ENCODE measurements at regions of chr4 and their contacts with region 1.

Region 1: DNA sequence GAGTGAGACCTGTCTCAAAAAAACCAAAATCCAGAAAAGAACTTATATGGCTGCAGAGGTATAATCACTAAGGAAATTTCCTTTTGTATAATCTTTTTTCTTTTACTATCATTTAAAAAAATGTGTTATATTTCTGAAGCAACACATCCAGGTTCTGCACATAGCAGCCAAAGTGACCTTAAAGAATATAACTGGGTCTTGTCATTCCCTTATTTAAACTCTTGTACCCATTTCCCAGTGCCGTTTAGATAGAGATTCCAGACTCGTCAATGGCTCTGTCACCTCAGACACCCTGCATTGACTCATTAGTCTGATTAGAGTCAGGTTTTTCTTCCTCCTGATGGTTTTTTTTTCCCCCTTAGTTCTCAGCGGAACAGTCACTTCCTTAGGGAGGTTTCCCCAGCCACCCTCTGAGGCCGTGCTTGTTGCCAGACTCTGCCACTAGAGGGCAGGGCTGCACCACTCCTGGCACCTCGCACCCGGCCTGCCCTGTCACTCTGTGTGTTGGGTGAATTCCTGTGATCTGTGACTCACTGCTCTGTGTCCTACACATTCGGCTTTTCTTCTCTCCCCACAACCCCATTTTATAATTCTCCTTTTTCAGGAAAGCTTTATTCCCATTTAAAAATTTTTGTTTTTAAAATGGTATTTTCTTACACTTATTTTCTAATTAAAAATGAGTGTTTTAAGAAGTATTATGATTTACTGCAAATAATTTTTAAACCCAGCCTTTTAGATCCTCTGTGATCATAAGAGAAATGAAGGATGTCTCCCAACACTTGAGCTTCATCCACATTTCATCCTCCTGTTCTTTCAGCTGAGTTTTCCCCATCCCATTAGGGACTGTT is 32.1 kb downstream of the HTT start:
- DNase-seq: peak; percentile 67 to 95
- H3K4me3 ChIP-seq: no peak overlapping the region
- H3K27ac ChIP-seq: peak overlapping the region; percentile 1 to 57
- H3K4me1 ChIP-seq: peaks cover 2 to 7% of the 10 kb centered on the region in 2 donors
- H3K27me3 ChIP-seq: no peaks in the 10 kb centered on the region
- CTCF ChIP-seq: peak; percentile 91 to 96 (median 91)

Region 2: DNA sequence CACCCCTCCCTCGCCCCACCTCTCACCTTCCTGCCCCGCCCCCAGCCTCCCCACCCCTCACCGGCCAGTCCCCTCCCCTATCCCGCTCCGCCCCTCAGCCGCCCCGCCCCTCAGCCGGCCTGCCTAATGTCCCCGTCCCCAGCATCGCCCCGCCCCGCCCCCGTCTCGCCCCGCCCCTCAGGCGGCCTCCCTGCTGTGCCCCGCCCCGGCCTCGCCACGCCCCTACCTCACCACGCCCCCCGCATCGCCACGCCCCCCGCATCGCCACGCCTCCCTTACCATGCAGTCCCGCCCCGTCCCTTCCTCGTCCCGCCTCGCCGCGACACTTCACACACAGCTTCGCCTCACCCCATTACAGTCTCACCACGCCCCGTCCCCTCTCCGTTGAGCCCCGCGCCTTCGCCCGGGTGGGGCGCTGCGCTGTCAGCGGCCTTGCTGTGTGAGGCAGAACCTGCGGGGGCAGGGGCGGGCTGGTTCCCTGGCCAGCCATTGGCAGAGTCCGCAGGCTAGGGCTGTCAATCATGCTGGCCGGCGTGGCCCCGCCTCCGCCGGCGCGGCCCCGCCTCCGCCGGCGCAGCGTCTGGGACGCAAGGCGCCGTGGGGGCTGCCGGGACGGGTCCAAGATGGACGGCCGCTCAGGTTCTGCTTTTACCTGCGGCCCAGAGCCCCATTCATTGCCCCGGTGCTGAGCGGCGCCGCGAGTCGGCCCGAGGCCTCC is 32.3 kb before region 1 on chr4 and contains the starts of genes HTT and HTT-AS:
- intact Hi-C with region 1: no loop called
- DNase-seq: peak; percentile 80 to 97
- H3K4me3 ChIP-seq: peak within 1 kb of the TSS; percentile 95 to 99
- H3K27ac ChIP-seq: peak within 1 kb of the TSS; percentile 86 to 98
- H3K4me1 ChIP-seq: peaks cover 12 to 14% of the 10 kb centered on the region in 2 donors
- H3K27me3 ChIP-seq: no peaks in the 10 kb centered on the region
- CTCF ChIP-seq: no peak
- total RNA-seq, gene HTT: 23.7 TPM
- total RNA-seq, gene HTT-AS: not detected

Region 3: GRCh38 chr4:3135155-3136011 is 28.8 kb after region 1 on chr4:
- intact Hi-C with region 1: loop called (anchors 2 kb)
- DNase-seq: no peak
- H3K4me3 ChIP-seq: peak overlapping the region in 1 of 2 donors; percentile 31
- H3K27ac ChIP-seq: peak overlapping the region; percentile 25 to 64
- H3K4me1 ChIP-seq: peaks cover 0 to 10% of the 10 kb centered on the region in 2 donors
- H3K27me3 ChIP-seq: no peaks in the 10 kb centered on the region
- CTCF ChIP-seq: no peak

Region 4: DNA sequence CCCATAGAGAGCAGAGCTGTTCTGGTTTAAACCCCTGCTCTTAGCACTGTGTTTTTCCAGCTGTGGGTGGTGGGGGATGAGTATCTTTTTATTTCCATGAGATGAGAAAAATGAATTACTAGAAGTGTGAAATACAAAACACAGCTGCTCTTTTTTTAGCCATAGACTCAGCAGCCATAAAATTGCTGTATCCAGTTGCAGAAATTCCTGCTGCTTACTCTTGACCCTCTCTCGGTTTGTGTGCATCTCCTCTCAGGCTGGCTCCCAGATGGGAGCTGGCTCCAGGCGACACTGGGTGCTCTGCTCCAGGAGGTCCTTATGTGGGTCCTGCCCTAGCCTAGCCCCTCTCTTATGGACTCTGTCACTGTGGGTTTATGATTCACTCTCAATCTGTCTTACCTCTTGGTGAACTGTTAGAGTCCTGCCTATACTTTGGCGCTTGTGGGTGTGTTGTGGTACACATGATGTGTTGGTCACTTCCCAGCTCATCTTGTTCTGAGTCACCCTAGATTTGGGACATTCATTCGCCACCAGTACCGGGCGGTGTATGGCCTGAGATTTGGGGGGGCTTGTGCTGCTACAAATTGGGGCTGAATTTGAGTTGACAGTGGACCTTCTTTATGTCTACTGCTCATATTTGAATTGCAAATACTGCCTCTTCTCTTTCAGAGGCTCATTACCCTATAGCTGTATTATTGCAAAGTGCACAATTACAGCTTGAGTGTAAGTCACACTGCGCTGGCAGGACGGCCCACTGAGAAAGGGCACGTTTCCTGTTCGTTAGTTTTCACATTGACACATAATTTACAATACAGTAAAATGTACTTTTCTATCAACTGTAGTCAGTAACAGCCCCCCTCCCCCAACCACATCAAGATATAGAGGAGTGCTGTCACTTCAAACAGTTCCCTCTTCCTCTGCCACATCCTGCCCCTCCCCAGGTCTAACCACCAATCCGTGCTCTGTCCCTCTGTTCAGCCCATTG is 95.4 kb after region 1 on chr4:
- intact Hi-C with region 1: no loop called
- DNase-seq: no peak
- H3K4me3 ChIP-seq: no peak overlapping the region
- H3K27ac ChIP-seq: no peak overlapping the region
- H3K4me1 ChIP-seq: peaks cover 0 to 3% of the 10 kb centered on the region in 2 donors
- H3K27me3 ChIP-seq: no peaks in the 10 kb centered on the region
- CTCF ChIP-seq: no peak

Region 5: GRCh38 chr4:3442959-3443749 is 336.6 kb after region 1 on chr4:
- intact Hi-C with region 1: loop called (anchors 10 kb)
- DNase-seq: no peak
- H3K4me3 ChIP-seq: no peak overlapping the region
- H3K27ac ChIP-seq: no peak overlapping the region
- H3K4me1 ChIP-seq: peaks cover 0 to 3% of the 10 kb centered on the region in 2 donors
- H3K27me3 ChIP-seq: no peaks in the 10 kb centered on the region
- CTCF ChIP-seq: peak; percentile 97 to 99 (median 98)

Region 6: GRCh38 chr4:3513807-3514206 is 407.2 kb after region 1 on chr4:
- intact Hi-C with region 1: no loop called
- DNase-seq: no peak
- H3K4me3 ChIP-seq: no peak overlapping the region
- H3K27ac ChIP-seq: no peak overlapping the region
- H3K4me1 ChIP-seq: no peaks in the 10 kb centered on the region
- H3K27me3 ChIP-seq: no peaks in the 10 kb centered on the region
- CTCF ChIP-seq: no peak

Region 7: GRCh38 chr4:3945511-3946290 is 839.1 kb after region 1 on chr4:
- intact Hi-C with region 1: loop called (anchors 10 kb)
- DNase-seq: no peak
- H3K4me3 ChIP-seq: no peak overlapping the region
- H3K27ac ChIP-seq: no peak overlapping the region
- H3K4me1 ChIP-seq: no peaks in the 10 kb centered on the region
- H3K27me3 ChIP-seq: no peaks in the 10 kb centered on the region
- CTCF ChIP-seq: no peak

Measured in ascending aorta (tissue), 2 donors.